ENCODE measurements at regions of chr14 and their contacts with region 1.

Region 1: DNA sequence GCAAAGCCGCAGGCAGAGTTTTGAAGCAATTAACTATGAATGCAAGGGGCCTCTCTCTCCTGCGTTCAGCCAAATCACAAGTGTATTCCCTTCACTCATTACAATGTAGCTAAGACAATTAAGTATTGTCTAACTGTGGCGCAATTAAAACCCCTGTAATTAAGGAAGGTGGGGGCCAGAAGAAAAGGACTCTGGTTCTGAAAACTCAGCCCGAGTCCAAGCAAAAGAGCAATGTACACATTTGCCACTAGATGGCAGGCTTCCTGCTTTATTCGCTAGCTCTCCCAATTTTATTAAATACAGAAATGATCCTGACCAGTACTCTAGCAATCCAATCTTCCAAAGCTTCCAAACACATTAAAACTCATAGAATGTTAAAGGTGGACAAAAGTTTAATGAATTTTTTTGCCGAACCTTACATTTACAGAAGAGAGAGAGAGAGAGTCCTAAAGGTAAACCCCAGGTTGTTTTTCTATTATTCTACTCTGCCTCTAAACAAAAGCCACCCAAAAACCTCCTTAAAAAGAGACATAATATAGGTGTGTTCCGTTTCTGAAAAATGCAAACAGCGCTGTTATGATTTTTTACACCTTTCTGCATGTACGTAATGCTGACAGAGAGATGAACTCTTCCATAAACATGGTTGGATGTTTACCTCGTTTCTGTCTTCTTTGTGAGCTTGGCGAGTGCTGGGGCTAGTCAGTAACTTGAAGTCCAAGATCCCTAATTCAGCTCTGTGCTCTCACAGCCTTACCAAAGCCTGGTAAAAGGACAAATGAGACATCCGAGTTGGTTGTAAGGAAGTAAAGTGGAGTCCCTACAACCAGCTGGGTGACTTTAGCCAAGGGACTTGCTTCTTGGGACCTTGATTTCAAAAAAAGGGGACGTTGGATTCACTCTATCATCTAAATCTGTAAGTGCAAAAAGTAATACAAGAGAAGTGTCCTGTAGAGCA is 50.9 kb upstream of the VASH1 start:
- DNase-seq: peak in 4 of 5 donors; percentile 14 to 40 (median 26)
- H3K4me3 ChIP-seq: no peak overlapping the region
- H3K4me3 Mint-ChIP-seq: no peak overlapping the region
- H3K27ac ChIP-seq: no peak overlapping the region
- H3K27ac Mint-ChIP-seq: no peak overlapping the region
- H3K4me1 ChIP-seq: no peaks in the 10 kb centered on the region
- H3K4me1 Mint-ChIP-seq: no peaks in the 10 kb centered on the region
- H3K27me3 ChIP-seq: no peaks in the 10 kb centered on the region
- H3K27me3 Mint-ChIP-seq: peaks cover 6 to 9% of the 10 kb centered on the region in 2 donors

Region 2: GRCh38 chr14:75542588-75543091 is 1167.7 kb before region 1 on chr14:
- CTCF ChIA-PET with region 1: no interaction called
- POLR2A ChIA-PET with region 1: no interaction called
- intact Hi-C with region 1: no loop called
- DNase-seq: peak; percentile 67 to 93 (median 71)
- H3K4me3 ChIP-seq: peak overlapping the region; percentile 34 to 42
- H3K4me3 Mint-ChIP-seq: peak overlapping the region; percentile 66 to 89 (median 82)
- H3K27ac ChIP-seq: peak overlapping the region; percentile 94
- H3K27ac Mint-ChIP-seq: peak overlapping the region; percentile 96 to 99 (median 97)
- H3K4me1 ChIP-seq: peaks cover 71% of the 10 kb centered on the region
- H3K4me1 Mint-ChIP-seq: peaks cover 48 to 79% (median 67%) of the 10 kb centered on the region in 4 donors
- H3K27me3 ChIP-seq: no peaks in the 10 kb centered on the region
- H3K27me3 Mint-ChIP-seq: no peaks in the 10 kb centered on the region

Region 3: DNA sequence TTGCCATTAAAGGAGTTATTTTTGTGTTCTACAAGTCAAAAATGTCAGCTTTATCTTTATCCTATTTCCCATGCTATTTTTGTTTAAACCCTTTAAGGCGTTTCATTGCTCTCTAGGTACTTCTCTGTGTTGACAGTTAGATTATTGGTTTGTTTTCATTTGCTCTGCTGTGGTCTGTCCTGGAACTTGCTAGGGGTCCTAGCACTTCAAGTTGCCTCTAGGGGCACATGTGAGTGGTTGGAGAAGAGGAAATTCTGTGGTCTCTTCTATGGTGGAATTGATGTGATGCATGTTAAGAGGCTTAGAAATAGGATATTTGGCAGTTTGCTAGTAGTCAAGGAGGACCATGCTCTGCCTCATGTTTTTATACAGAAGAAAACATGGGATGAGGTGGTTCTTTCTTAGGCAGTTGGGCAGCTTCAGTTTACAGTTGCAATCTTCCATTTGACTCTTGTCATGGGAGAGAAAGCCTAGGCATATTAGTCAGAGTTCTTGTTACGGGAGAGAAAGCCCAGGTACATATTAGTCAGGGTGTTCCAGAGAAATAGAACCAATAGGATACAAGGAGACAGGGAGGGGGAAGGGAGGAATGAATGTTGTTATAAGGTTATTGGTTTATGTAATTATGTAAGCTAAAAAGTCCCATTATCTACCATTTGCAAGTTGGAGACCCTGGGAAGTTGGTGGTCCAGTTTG is 1034.9 kb before region 1 on chr14:
- CTCF ChIA-PET with region 1: no interaction called
- POLR2A ChIA-PET with region 1: no interaction called
- intact Hi-C with region 1: no loop called
- DNase-seq: no peak
- H3K4me3 ChIP-seq: no peak overlapping the region
- H3K4me3 Mint-ChIP-seq: no peak overlapping the region
- H3K27ac ChIP-seq: no peak overlapping the region
- H3K27ac Mint-ChIP-seq: peak overlapping the region in 1 of 7 donors; percentile 54
- H3K4me1 ChIP-seq: no peaks in the 10 kb centered on the region
- H3K4me1 Mint-ChIP-seq: peaks cover 0 to 18% (median 6%) of the 10 kb centered on the region in 4 donors
- H3K27me3 ChIP-seq: no peaks in the 10 kb centered on the region
- H3K27me3 Mint-ChIP-seq: no peaks in the 10 kb centered on the region

Region 4: GRCh38 chr14:76720382-76720813 is 10.1 kb after region 1 on chr14:
- CTCF ChIA-PET with region 1: interaction called, 81 read pairs
- POLR2A ChIA-PET with region 1: interaction called, 3 read pairs
- intact Hi-C with region 1: no loop called
- DNase-seq: no peak
- H3K4me3 ChIP-seq: no peak overlapping the region
- H3K4me3 Mint-ChIP-seq: peak overlapping the region in 1 of 8 donors; percentile 24
- H3K27ac ChIP-seq: no peak overlapping the region
- H3K27ac Mint-ChIP-seq: peak overlapping the region in 4 of 7 donors; percentile 60 to 81 (median 70)
- H3K4me1 ChIP-seq: peaks cover 7% of the 10 kb centered on the region
- H3K4me1 Mint-ChIP-seq: no peaks in the 10 kb centered on the region
- H3K27me3 ChIP-seq: no peaks in the 10 kb centered on the region
- H3K27me3 Mint-ChIP-seq: peaks cover 19 to 27% of the 10 kb centered on the region in 2 donors

Region 5: GRCh38 chr14:76784266-76785264 is 74.2 kb after region 1 on chr14:
- CTCF ChIA-PET with region 1: interaction called, 209 read pairs
- POLR2A ChIA-PET with region 1: interaction called, 4 read pairs
- intact Hi-C with region 1: loop called (anchors 1 kb)
- DNase-seq: peak; percentile 20 to 68 (median 58)
- H3K4me3 ChIP-seq: no peak overlapping the region
- H3K4me3 Mint-ChIP-seq: no peak overlapping the region
- H3K27ac ChIP-seq: no peak overlapping the region
- H3K27ac Mint-ChIP-seq: peak overlapping the region; percentile 35 to 95 (median 82)
- H3K4me1 ChIP-seq: peaks cover 25% of the 10 kb centered on the region
- H3K4me1 Mint-ChIP-seq: peaks cover 13 to 24% (median 14%) of the 10 kb centered on the region in 4 donors
- H3K27me3 ChIP-seq: no peaks in the 10 kb centered on the region
- H3K27me3 Mint-ChIP-seq: no peaks in the 10 kb centered on the region

Region 6: DNA sequence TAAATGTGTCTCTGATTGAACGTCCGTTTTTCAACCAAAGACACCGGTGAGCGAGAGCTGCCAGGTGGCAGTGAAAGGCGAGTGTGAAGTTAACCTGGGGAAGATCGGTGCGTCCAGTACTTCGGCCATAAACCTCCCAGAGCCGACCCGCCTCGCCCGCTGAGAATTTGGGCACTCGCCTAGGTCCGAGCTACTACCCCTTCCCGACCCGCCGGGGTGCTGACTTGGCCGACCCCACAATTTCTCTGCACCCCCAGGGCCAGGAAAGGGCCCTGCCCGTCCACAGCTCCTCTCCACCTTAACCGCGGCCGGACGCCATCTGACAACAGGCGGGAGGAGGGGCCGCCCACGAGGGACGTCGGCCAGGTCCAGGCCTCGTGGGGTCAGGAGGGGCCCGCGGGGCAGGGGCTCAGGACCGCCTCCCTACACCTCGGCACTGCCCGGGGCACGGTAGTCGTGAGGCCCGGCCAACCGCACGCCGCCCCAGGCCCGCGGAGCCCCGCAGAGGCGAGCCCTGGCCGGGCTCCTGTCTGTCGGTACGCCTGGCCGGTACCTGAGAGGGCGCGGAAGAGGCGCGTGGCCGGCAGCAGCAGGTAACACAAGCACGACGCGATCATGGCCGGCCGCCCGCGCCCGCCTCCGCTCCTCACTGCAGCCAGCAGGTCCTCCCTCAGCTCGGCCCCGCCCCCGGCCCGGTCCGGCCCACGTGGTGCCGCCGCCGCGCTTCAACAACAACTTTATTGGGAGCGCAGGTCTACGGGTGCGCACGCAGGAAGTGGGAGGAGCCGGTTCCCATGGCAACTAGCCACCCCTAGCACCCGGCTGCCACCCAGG is 102.1 kb after region 1 on chr14 and contains the start of gene ANGEL1:
- CTCF ChIA-PET with region 1: interaction called, 74 read pairs
- POLR2A ChIA-PET with region 1: interaction called, 9 read pairs
- intact Hi-C with region 1: loop called (anchors 1 kb)
- DNase-seq: peak; percentile 94 to 97 (median 96)
- H3K4me3 ChIP-seq: peak within 1 kb of the TSS; percentile 43 to 78
- H3K4me3 Mint-ChIP-seq: peak within 1 kb of the TSS; percentile 87 to 98 (median 94)
- H3K27ac ChIP-seq: peak within 1 kb of the TSS; percentile 76
- H3K27ac Mint-ChIP-seq: peak within 1 kb of the TSS; percentile 93 to 98 (median 95)
- H3K4me1 ChIP-seq: peaks cover 24% of the 10 kb centered on the region
- H3K4me1 Mint-ChIP-seq: peaks cover 21 to 37% (median 28%) of the 10 kb centered on the region in 4 donors
- H3K27me3 ChIP-seq: no peaks in the 10 kb centered on the region
- H3K27me3 Mint-ChIP-seq: peaks cover 0 to 2% of the 10 kb centered on the region in 2 donors
- total RNA-seq, gene ANGEL1: 26.1 to 28.0 TPM

Region 7: GRCh38 chr14:77067632-77068514 is 357.5 kb after region 1 on chr14:
- CTCF ChIA-PET with region 1: interaction called, 22 read pairs
- POLR2A ChIA-PET with region 1: no interaction called
- intact Hi-C with region 1: loop called (anchors 1 kb)
- DNase-seq: peak in 4 of 5 donors; percentile 45 to 63 (median 58)
- H3K4me3 ChIP-seq: no peak overlapping the region
- H3K4me3 Mint-ChIP-seq: no peak overlapping the region
- H3K27ac ChIP-seq: no peak overlapping the region
- H3K27ac Mint-ChIP-seq: no peak overlapping the region
- H3K4me1 ChIP-seq: no peaks in the 10 kb centered on the region
- H3K4me1 Mint-ChIP-seq: peaks cover 0 to 3% (median under 1%) of the 10 kb centered on the region in 4 donors
- H3K27me3 ChIP-seq: no peaks in the 10 kb centered on the region
- H3K27me3 Mint-ChIP-seq: peaks cover 0 to 4% of the 10 kb centered on the region in 2 donors